ENCODE measurements at regions of chr20 and their contacts with region 1.

Region 1: GRCh38 chr20:34876162-34877001 is at the start of gene ACSS2:
- DNase-seq: peak; percentile 98 to 100
- H3K4me3 ChIP-seq: peak within 1 kb of the TSS; percentile 97 to 99
- H3K27ac ChIP-seq: peak within 1 kb of the TSS; percentile 91 to 97
- H3K4me1 ChIP-seq: peaks cover 0 to 22% of the 10 kb centered on the region in 2 donors
- H3K27me3 ChIP-seq: no peaks in the 10 kb centered on the region
- CTCF ChIP-seq: no peak
- total RNA-seq, gene ACSS2: 156 TPM

Region 2: DNA sequence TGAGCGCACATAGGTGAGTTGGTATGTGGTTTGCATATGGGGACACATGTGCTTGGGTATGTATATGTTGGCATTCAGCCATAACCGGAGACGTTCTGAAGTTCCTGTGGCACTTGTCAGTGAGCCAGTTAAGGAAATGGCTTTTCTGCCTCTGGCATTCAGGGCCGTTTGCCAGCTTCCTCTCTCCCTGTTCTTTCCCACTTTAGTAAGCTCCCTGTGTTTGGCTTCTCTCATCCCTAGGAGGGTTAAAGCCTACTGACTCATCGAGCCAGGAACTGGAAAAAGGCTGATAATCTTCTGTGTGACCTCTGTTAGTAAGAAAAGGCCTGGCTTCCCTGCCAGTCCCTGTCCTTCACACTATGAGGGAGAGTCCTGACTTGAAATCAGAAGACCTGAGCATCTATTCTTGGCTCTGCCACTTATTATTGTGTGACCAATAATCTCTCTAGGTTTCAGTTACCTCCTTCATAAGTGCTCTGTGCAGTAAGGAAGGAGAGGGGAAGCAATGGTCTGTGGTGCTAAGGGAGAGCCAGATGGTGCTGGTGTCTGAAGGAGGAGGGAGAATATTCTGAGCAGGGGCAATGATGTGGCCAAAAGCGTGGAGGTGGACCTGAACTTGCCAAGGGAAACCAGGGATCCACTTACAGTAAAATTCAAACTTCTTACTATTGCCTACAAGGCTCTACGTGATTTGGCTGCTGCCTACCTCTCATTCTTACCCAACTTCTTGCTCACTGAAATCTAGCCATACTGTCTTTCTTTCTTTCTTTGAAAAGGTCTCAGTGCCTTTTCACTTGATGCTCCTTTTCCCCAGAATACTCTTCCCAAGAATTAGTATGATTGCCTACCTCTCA is 31.5 kb after region 1 on chr20:
- intact Hi-C with region 1: loop called (anchors 1 kb)
- DNase-seq: peak in 1 of 2 donors; percentile 79
- H3K4me3 ChIP-seq: no peak overlapping the region
- H3K27ac ChIP-seq: peak overlapping the region; percentile 77 to 82
- H3K4me1 ChIP-seq: peaks cover 6 to 28% of the 10 kb centered on the region in 2 donors
- H3K27me3 ChIP-seq: no peaks in the 10 kb centered on the region
- CTCF ChIP-seq: no peak

Region 3: GRCh38 chr20:34922654-34923424 is 46.5 kb after region 1 on chr20:
- intact Hi-C with region 1: loop called (anchors 1 kb)
- DNase-seq: peak in 1 of 2 donors; percentile 79
- H3K4me3 ChIP-seq: no peak overlapping the region
- H3K27ac ChIP-seq: peak overlapping the region; percentile 15 to 78
- H3K4me1 ChIP-seq: peaks cover 0 to 19% of the 10 kb centered on the region in 2 donors
- H3K27me3 ChIP-seq: no peaks in the 10 kb centered on the region
- CTCF ChIP-seq: no peak

Region 4: DNA sequence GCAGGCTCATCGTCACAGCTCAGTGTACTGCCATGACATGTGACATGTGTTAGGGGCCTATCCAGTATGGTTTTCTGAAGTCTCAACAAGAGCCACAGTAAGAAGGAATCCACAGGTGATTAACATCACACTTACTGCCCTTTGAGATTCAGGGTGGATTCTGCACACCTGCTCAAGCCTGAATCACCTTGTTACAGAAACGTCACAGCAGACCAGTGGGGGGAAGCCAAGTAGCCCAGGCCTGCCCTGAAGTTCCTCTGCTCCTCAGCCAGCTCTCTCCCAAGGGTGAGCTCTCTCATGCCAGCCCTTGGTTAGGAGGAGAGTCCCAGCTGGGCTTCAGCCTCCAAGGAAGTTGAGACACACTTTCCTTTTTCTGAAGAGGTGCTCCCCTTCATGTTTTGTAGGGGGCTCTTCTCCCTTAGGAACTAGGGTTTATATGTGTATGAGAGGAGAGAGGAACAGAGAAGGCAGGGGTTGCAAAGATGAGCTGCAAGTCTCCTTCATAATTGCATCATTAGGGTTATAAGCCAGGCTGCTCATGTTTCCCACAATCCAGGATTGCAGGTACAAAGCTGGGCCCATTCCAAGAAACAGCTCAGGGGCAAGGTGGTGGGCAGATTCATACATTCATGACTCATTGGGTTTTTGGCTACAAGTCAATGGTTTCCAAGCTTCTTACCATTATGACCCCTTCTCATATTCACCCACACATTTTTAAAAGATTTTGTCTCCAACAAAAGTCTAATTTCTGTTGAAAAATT is 67.6 kb after region 1 on chr20:
- intact Hi-C with region 1: no loop called
- DNase-seq: no peak
- H3K4me3 ChIP-seq: no peak overlapping the region
- H3K27ac ChIP-seq: no peak overlapping the region
- H3K4me1 ChIP-seq: no peaks in the 10 kb centered on the region
- H3K27me3 ChIP-seq: no peaks in the 10 kb centered on the region
- CTCF ChIP-seq: no peak

Region 5: GRCh38 chr20:34955232-34956040 is 79.1 kb after region 1 on chr20 and contains the starts of genes GSS and MYH7B:
- intact Hi-C with region 1: loop called (anchors 1 kb)
- DNase-seq: peak; percentile 93 to 99
- H3K4me3 ChIP-seq: peak within 1 kb of the TSS; percentile 60 to 74
- H3K27ac ChIP-seq: peak within 1 kb of the TSS; percentile 89 to 91
- H3K4me1 ChIP-seq: peaks cover 4 to 5% of the 10 kb centered on the region in 2 donors
- H3K27me3 ChIP-seq: no peaks in the 10 kb centered on the region
- CTCF ChIP-seq: peak; percentile 49 to 85 (median 77)
- total RNA-seq, gene GSS: 40.7 TPM
- total RNA-seq, gene MYH7B: 4.7 TPM

Region 6: GRCh38 chr20:35008411-35009342 is 132.3 kb after region 1 on chr20:
- intact Hi-C with region 1: loop called (anchors 1 kb)
- DNase-seq: peak; percentile 61 to 90
- H3K4me3 ChIP-seq: no peak overlapping the region
- H3K27ac ChIP-seq: peak overlapping the region; percentile 60 to 80
- H3K4me1 ChIP-seq: peaks cover 4 to 15% of the 10 kb centered on the region in 2 donors
- H3K27me3 ChIP-seq: no peaks in the 10 kb centered on the region
- CTCF ChIP-seq: no peak

Measured in ascending aorta (tissue), 2 donors.